ENCODE measurements at regions of chr14 and their contacts with region 1.

Region 1: DNA sequence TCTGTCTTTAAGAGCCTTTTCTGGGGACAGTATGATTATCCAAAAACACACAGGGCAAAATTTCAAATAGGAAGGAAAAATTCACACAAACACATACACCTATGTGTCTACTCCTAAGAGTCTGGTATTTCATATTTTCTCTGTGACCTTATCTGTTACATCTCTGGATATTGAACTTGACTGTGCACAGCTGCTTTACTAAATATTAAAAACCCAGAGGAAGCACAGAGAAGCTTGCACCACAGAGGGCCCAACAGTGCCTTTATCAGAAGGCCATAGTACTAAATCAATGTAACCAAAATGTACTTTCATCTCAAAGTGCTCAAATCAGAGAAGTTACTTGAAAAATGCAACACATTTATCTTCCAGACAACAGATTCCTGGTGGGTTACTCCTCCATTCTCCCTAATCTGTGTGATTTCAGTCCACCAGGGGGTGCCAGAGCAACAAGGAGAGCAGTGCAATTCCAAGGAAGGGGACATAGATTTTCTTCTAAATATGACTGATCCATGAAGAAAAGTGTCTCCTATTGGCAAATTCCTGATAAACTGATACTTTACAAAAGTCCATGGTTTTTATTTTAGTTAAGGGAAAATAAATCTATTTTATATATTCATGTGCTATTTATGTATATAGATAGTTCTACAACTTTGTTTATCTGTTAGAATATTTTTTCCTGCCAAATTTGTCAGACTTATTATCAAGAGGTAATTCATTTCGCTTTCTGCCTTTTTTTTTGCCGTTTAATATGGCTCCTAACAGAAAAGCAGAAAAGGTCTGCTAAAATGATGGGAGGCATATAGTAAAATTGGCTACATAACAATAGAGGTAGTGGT is 617.6 kb downstream of the LRFN5 start:
- H3K4me3 Mint-ChIP-seq: no peak overlapping the region
- H3K27ac Mint-ChIP-seq: no peak overlapping the region
- H3K4me1 Mint-ChIP-seq: no peaks in the 10 kb centered on the region
- H3K27me3 Mint-ChIP-seq: no peaks in the 10 kb centered on the region

Region 2: GRCh38 chr14:41758011-41758665 is 466.1 kb before region 1 on chr14:
- intact Hi-C with region 1: no loop called
- H3K4me3 Mint-ChIP-seq: no peak overlapping the region
- H3K27ac Mint-ChIP-seq: no peak overlapping the region
- H3K4me1 Mint-ChIP-seq: no peaks in the 10 kb centered on the region
- H3K27me3 Mint-ChIP-seq: no peaks in the 10 kb centered on the region

Region 3: GRCh38 chr14:43005807-43006206 is 781.5 kb after region 1 on chr14:
- intact Hi-C with region 1: loop called (anchors 1 kb)
- H3K4me3 Mint-ChIP-seq: no peak overlapping the region
- H3K27ac Mint-ChIP-seq: no peak overlapping the region
- H3K4me1 Mint-ChIP-seq: no peaks in the 10 kb centered on the region
- H3K27me3 Mint-ChIP-seq: no peaks in the 10 kb centered on the region

Region 4: GRCh38 chr14:43894534-43894933 is 1670.3 kb after region 1 on chr14:
- intact Hi-C with region 1: loop called (anchors 10 kb)
- H3K4me3 Mint-ChIP-seq: no peak overlapping the region
- H3K27ac Mint-ChIP-seq: no peak overlapping the region
- H3K4me1 Mint-ChIP-seq: no peaks in the 10 kb centered on the region
- H3K27me3 Mint-ChIP-seq: no peaks in the 10 kb centered on the region

Measured in dendritic cell treated with granulocyte-macrophage colony-stimulating factor and Interleukin-4, amounts not matched to agents 40 ng/mL and 50 ng/mL, for 4 days (primary cell).